T-cell (primary cell): ENCODE measurements at regions of chr14 and their contacts with region 1.

Region 1: GRCh38 chr14:72926292-72927028 is at the start of gene DCAF4:
- DNase-seq: peak; percentile 81 to 97 (median 92)
- ATAC-seq: peak; percentile 94 to 97 (median 96)
- H3K4me3 ChIP-seq: peak within 1 kb of the TSS; percentile 78 to 86
- H3K4me3 Mint-ChIP-seq: peak within 1 kb of the TSS; percentile 93 to 95 (median 94)
- H3K27ac ChIP-seq: peak within 1 kb of the TSS; percentile 51
- H3K27ac Mint-ChIP-seq: peak within 1 kb of the TSS; percentile 87 to 94
- H3K4me1 ChIP-seq: peaks cover 6 to 23% of the 10 kb centered on the region in 2 experiments
- H3K4me1 Mint-ChIP-seq: peaks cover 17 to 26% (median 20%) of the 10 kb centered on the region in 3 donors
- H3K27me3 ChIP-seq: peaks cover 0 to 9% of the 10 kb centered on the region in 2 experiments
- H3K27me3 Mint-ChIP-seq: no peaks in the 10 kb centered on the region
- total RNA-seq, gene DCAF4: 21.3 to 36.4 (median 25.4) TPM

Region 2: DNA sequence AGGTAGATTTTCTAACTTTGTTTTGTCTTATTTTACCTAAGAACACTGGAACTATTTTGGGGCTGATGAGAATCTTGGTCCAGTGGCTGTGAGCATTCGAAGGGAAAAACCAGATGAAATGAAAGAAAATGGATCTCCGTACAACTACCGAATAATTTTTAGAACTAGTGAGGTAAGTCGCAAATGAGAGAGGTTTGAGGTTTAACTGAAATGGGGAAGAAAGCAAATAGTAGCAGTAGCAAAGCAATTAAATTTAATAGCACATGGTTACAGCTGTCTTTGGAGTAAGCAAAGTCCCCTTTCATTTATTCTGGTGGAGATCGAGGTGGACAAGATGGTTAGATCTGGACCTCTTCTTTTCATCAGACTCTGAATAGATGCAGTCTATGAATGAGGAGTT is 1307.7 kb before region 1 on chr14:
- CTCF ChIA-PET with region 1: no interaction called
- POLR2A ChIA-PET with region 1: interaction called in 1 of 2 experiments, 15 read pairs
- DNase-seq: no peak
- ATAC-seq: no peak
- H3K4me3 ChIP-seq: no peak overlapping the region
- H3K4me3 Mint-ChIP-seq: no peak overlapping the region
- H3K27ac ChIP-seq: no peak overlapping the region
- H3K27ac Mint-ChIP-seq: no peak overlapping the region
- H3K4me1 ChIP-seq: no peaks in the 10 kb centered on the region
- H3K4me1 Mint-ChIP-seq: peaks cover 6 to 10% (median 9%) of the 10 kb centered on the region in 3 donors
- H3K27me3 ChIP-seq: no peaks in the 10 kb centered on the region
- H3K27me3 Mint-ChIP-seq: no peaks in the 10 kb centered on the region

Region 3: DNA sequence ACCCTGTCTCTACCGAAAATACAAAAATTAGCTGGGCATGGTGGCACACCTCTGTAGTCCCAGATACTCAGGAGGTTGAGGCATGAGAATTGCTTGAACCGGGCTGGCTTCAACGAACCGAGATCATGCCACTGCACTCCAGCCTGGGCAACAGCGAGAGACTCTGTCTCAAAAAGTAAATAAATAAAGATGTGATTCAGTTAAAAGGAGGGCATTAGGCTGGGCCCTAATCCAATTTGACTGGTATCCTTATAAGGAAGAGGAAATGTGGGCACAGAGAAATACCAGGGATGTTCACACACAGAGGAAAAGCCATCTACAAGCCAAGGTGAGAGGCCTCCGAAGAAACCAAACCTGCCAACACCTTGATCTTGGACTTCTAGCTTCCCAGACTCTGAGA is 10.3 kb before region 1 on chr14:
- CTCF ChIA-PET with region 1: no interaction called
- POLR2A ChIA-PET with region 1: no interaction called
- DNase-seq: no peak
- ATAC-seq: no peak
- H3K4me3 ChIP-seq: no peak overlapping the region
- H3K4me3 Mint-ChIP-seq: no peak overlapping the region
- H3K27ac ChIP-seq: no peak overlapping the region
- H3K27ac Mint-ChIP-seq: no peak overlapping the region
- H3K4me1 ChIP-seq: no peaks in the 10 kb centered on the region
- H3K4me1 Mint-ChIP-seq: no peaks in the 10 kb centered on the region
- H3K27me3 ChIP-seq: peaks cover 0 to 2% of the 10 kb centered on the region in 2 experiments
- H3K27me3 Mint-ChIP-seq: peaks cover 9 to 18% of the 10 kb centered on the region in 2 donors